ENCODE measurements at regions of chr15 and their contacts with region 1.

Region 1: DNA sequence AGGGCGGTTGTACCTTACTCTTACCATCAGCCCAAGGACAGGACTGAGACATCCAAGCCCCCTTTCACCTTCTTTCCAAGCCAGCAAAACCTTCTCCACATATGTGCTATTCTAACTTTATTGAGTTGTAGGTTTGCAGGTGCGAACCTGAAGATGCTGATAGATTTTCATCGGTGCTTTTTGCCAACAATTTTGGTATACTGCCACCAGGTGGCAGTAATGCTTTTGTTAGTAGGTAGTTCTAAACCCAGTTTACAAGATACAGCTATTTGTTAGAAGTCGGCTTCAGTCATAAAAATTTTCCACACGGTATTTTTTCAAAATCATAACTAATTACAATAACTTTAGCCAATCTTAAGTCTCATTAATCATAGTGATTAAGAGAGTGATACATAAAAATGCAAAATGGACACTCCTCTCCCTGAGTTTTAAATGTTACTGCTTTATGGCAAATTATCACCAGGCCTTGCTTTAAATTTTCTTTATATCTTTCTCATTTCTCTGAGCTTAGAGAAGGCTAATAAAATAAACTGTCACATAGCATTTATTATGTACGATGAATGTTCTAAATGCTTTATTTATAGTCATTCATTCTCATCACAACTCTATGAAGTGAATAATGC is 636 bp downstream of the TBC1D21 start:
- DNase-seq: no peak
- ATAC-seq: peak; percentile 38; the same call in 1 of the 2 replicates
- H3K4me3 Mint-ChIP-seq: no peak overlapping the region
- H3K27ac Mint-ChIP-seq: no peak overlapping the region
- H3K4me1 Mint-ChIP-seq: peaks cover 7% of the 10 kb centered on the region
- H3K27me3 Mint-ChIP-seq: no peaks in the 10 kb centered on the region; the same call in 1 of the 2 replicates
- CTCF ChIP-seq: 0 out of 2 replicates have a peak, but pooled peaks have one; percentile 39

Region 2: DNA sequence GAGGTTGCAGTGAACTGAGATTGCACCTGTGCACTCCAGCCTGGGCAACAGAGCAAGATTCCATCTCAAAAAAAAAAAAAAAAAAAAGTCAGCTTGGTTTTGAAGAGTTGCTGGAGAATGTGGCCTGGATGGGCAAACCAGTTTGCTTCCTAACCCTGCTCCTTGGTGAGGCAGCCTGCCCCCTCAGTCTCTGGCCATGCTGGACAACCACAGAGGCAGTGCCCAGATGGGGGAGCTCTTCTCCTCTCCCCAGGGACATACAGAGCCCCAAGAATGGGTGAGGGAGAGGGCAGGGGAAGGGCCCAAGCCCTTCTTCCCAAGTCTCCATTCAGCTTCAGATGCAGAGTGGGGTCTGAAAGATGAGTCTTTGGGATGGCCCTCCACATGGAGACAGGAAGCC is 161.9 kb before region 1 on chr15:
- CTCF ChIA-PET with region 1: interaction called, 11 read pairs
- POLR2A ChIA-PET with region 1: no interaction called
- DNase-seq: peak; percentile 48
- ATAC-seq: peak; percentile 68
- H3K4me3 Mint-ChIP-seq: no peak overlapping the region
- H3K27ac Mint-ChIP-seq: peak overlapping the region; percentile 45; the same call in 1 of the 2 replicates
- H3K4me1 Mint-ChIP-seq: no peaks in the 10 kb centered on the region
- H3K27me3 Mint-ChIP-seq: no peaks in the 10 kb centered on the region
- CTCF ChIP-seq: no peak

Region 3: GRCh38 chr15:73885954-73886700 is 12.1 kb after region 1 on chr15:
- CTCF ChIA-PET with region 1: interaction called, 13 read pairs
- POLR2A ChIA-PET with region 1: no interaction called
- DNase-seq: no peak
- ATAC-seq: no peak
- H3K4me3 Mint-ChIP-seq: no peak overlapping the region
- H3K27ac Mint-ChIP-seq: no peak overlapping the region
- H3K4me1 Mint-ChIP-seq: 0 out of 2 replicates have a peak, but pooled peaks cover 3% of the 10 kb centered on the region
- H3K27me3 Mint-ChIP-seq: no peaks in the 10 kb centered on the region; the same call in 1 of the 2 replicates
- CTCF ChIP-seq: no peak

Region 4: GRCh38 chr15:73891328-73892315 is 17.6 kb after region 1 on chr15:
- CTCF ChIA-PET with region 1: interaction called, 23 read pairs
- POLR2A ChIA-PET with region 1: interaction called, 3 read pairs
- DNase-seq: no peak
- ATAC-seq: no peak
- H3K4me3 Mint-ChIP-seq: no peak overlapping the region
- H3K27ac Mint-ChIP-seq: no peak overlapping the region
- H3K4me1 Mint-ChIP-seq: peaks cover 12% of the 10 kb centered on the region
- H3K27me3 Mint-ChIP-seq: peaks cover 4% of the 10 kb centered on the region; the same call in 1 of the 2 replicates
- CTCF ChIP-seq: no peak

Region 5: DNA sequence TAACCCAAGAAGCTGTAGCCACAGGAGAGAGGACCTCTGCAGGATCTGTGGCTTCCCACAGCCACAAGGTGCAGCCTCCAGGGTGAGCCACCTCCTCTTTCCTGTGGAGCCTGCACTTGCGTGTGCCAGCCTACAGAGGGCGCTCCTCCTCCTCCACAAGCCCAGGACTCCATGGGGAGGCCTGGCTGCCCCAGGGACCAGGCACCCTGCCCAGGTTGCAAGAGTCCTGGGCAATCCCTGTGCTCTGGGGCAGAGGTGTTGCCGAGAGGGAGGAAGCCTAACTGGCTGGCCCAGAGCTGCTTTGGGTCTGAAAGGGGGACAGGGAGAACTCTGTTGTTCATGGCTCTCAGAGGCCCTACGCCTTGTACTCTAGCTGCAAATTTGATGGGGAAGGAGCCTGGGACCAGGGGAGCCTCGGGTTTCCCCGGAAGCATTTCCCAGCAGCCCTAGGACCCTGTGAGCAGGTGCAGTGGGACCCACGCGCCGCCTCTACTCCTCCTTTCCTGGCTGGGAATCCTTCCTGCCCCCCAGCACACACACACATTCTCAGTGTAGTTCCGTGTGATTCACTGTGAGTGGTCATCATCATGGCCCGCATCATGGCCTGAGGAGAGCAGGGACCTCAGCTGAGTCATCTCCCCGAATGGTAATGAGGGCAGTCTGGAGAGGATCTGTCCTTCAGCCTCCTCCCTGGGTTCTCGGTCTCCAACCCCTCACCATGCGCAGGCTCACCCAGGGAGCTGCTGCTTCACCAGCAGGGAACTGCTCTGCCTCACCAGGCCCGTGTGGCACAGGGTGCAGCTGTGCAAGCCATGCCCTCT is 23.7 kb after region 1 on chr15:
- CTCF ChIA-PET with region 1: interaction called, 23 read pairs
- POLR2A ChIA-PET with region 1: interaction called, 3 read pairs
- DNase-seq: peak; percentile 78
- ATAC-seq: peak; percentile 92
- H3K4me3 Mint-ChIP-seq: no peak overlapping the region
- H3K27ac Mint-ChIP-seq: no peak overlapping the region
- H3K4me1 Mint-ChIP-seq: peaks cover 14% of the 10 kb centered on the region
- H3K27me3 Mint-ChIP-seq: no peaks in the 10 kb centered on the region
- CTCF ChIP-seq: peak; percentile 99

Region 6: DNA sequence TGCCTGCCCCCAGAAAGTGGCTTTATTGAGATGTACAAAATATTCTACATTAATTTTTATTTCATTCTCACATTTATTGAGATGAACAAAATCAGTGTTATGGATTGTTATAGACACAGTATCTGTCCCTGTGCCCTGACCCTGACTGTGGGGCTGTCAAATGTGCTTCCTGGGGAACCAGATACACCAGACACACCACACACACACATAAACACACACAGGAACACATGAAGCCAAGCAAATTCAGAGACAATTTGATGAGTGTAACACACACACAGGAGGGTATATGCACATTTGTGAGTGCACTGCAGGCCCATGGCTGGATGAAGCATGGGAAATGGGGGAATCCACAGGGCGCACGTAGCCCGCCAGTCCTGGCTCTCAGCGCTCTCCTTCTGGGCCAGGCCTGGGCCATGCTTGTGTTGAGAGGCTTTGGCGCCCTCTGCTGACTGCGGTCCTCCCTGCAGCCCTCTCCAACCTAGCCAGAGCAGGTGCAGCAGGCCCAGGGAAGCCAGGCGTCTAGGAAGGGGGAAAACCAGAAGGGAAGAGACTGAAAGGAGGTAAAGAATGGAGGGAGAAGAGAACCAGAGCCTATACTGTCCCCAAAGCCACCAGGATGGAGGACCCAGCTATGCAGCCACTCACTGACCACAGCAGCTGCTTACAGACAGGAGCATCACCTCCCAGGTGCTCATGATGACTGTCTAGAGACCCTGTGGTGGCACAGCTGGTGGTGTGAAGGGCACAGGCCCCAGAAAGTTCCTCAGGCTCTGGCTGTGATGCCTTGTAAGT is 34.2 kb after region 1 on chr15:
- CTCF ChIA-PET with region 1: interaction called, 45 read pairs
- POLR2A ChIA-PET with region 1: no interaction called
- DNase-seq: peak; percentile 95
- ATAC-seq: peak; percentile 99
- H3K4me3 Mint-ChIP-seq: no peak overlapping the region
- H3K27ac Mint-ChIP-seq: no peak overlapping the region
- H3K4me1 Mint-ChIP-seq: peaks cover 5% of the 10 kb centered on the region
- H3K27me3 Mint-ChIP-seq: peaks cover 7% of the 10 kb centered on the region
- CTCF ChIP-seq: peak; percentile 86

Region 7: DNA sequence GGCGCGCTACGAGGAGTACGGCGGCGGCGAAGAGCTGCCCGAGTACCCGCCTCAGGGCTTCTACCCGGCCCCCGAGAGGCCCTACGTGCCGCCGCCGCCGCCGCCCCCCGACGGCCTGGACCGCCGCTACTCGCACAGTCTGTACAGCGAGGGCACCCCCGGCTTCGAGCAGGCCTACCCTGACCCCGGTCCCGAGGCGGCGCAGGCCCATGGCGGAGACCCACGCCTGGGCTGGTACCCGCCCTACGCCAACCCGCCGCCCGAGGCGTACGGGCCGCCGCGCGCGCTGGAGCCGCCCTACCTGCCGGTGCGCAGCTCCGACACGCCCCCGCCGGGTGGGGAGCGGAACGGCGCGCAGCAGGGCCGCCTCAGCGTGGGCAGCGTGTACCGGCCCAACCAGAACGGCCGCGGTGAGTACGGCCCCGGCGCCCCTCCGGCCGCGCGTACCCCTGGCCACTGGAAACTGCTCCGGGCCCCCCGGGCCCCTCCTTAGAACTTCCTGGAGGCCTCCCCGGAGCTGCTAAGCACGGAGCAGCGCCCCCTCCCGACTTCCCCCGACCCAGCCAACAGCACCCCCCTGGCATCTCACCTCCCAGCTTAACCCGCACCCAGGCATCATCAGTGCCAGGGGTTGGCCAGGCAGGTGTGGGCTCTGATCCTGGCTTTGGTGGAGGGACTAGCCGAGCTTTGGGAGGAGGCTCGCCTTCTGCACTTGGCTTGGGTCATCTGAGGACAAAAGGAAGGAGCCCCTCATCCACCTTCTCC is 53.7 kb after region 1 on chr15:
- CTCF ChIA-PET with region 1: interaction called, 29 read pairs
- POLR2A ChIA-PET with region 1: no interaction called
- DNase-seq: peak; percentile 74
- ATAC-seq: peak; percentile 38
- H3K4me3 Mint-ChIP-seq: peak overlapping the region; percentile 68
- H3K27ac Mint-ChIP-seq: no peak overlapping the region
- H3K4me1 Mint-ChIP-seq: peaks cover 43% of the 10 kb centered on the region
- H3K27me3 Mint-ChIP-seq: peaks cover 11% of the 10 kb centered on the region
- CTCF ChIP-seq: peak; percentile 33; the same call in 1 of the 2 replicates

Region 8: DNA sequence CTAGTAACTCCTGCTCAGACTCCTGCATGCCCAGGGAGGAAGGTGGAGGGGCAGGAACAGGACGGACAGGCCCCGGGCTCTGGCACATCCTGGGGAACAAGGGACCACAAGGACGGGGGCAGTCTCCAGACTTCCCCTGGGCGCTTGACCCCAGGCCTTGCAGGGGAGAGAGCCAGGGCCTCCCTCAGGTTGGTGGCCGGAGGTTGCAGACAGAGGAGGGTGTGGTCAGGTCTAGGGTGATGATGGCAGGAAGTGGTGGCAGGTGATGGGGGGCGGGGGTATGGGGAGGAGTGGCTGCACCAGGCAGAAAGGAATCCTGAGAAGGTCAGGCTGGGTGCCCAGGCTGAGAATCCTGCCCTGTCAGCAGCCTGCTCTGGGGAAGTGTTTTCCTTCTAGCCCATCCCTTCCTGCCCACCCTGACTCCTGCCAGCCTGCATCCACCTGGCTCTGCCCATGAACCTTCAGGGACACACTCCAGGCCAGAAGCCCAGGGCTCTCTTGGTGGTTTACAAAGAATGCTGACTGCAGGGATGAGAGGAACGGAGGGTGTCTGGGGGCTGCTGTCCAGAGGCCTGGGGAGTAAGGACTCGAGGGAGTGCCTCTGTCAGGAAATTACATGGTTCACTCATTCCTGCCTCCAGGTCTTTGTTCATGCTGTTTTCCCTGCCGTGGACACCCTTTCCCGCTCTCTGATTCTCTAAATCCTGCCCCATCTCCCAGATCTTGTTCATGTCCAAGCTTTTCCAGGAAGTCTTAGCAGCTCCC is 68.1 kb after region 1 on chr15:
- CTCF ChIA-PET with region 1: no interaction called
- POLR2A ChIA-PET with region 1: no interaction called
- DNase-seq: no peak
- ATAC-seq: 0 out of 2 replicates have a peak, but pooled peaks have one; percentile 14
- H3K4me3 Mint-ChIP-seq: no peak overlapping the region
- H3K27ac Mint-ChIP-seq: no peak overlapping the region
- H3K4me1 Mint-ChIP-seq: no peaks in the 10 kb centered on the region
- H3K27me3 Mint-ChIP-seq: no peaks in the 10 kb centered on the region
- CTCF ChIP-seq: no peak

Region 9: DNA sequence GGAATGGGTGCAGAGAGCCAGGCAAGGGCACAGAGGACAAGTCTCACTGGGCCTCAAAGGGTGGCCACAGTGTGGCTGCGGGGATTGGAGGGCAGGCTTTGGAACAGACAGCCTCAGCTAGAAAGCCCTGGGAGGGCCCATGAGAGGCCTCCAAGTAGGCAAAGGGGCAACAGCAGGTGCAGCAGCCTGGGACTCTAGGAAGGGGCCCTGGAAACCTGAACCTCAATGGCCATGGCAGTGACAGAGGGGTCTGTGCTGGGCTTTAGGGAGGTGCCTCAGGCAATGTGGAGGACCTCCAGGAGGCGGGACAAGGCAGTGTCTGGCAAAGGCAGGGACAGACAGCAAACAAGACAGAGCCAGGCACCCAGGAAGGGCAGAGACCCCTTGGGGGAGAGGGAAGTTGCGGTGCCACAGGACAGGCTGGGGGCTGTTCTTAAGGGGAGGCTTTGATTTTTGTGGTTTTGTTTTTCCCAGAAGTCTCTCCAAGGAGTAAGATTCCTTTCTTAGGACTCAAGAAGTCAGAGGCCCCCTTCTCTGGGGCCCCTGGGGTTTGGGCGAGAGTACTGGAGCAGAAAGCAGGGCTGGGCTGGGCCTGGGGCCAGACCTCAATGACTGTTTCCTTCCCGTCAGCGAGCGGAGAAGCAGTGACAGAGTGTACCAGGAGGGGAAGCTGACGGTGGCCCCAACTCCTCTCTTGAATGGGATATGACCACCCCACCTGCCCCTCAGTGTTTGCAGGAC is 108.4 kb after region 1 on chr15:
- CTCF ChIA-PET with region 1: no interaction called
- POLR2A ChIA-PET with region 1: no interaction called
- DNase-seq: no peak
- ATAC-seq: no peak
- H3K4me3 Mint-ChIP-seq: no peak overlapping the region
- H3K27ac Mint-ChIP-seq: no peak overlapping the region
- H3K4me1 Mint-ChIP-seq: no peaks in the 10 kb centered on the region
- H3K27me3 Mint-ChIP-seq: peaks cover 12% of the 10 kb centered on the region
- CTCF ChIP-seq: no peak

Region 10: DNA sequence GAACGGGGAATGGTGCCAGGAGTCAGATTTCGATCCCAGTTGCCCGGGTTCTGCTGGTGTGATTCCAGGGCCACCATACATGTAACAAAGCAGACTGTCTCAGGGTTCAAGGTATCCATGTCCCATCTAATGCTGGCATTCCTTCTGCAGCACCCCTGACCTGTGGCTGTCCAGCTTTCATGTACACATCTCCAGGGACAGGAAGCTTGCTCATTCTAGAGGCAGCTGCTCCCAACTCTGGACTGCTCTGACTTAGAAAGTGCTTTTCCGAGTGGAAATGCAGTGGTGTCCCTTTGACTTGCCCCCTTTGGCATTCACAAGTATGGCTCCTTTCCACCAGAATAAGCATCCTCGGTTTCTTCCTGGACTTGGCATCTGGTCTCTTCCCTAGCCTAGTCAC is 151.4 kb after region 1 on chr15:
- CTCF ChIA-PET with region 1: no interaction called
- POLR2A ChIA-PET with region 1: no interaction called
- DNase-seq: no peak
- ATAC-seq: no peak
- H3K4me3 Mint-ChIP-seq: no peak overlapping the region
- H3K27ac Mint-ChIP-seq: no peak overlapping the region
- H3K4me1 Mint-ChIP-seq: no peaks in the 10 kb centered on the region
- H3K27me3 Mint-ChIP-seq: no peaks in the 10 kb centered on the region
- CTCF ChIP-seq: no peak

Region 11: DNA sequence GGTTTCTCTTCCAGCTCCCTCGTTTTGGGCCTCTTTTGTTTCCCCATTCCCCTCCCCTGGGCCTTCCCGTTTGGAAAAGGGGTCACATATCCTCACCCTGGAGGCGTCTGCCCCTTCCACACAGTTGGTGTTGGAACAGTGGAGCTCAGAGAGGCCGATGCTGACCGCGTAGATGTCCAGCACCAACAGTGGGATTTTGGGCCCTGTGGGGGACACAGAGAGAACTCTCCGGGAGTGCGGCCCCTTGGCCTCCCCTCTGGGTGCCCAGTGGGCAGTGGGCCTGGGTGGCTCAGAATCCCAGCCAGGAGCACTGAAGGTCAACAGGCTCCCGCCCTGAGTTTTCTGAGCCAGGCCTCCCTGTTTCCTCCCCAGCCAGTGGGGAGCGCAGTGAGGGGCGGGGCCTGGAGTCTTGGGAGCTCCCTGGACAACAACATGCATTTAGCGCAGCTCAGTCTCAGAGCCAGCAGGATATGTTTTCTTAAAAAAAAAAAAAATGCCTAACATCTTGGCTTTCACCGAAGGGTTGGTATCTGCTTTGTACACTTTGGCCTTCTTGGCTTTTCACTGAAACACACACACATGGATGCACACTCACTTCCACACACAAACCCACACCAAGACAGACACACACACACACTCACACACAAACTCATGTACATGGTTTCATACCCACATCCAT is 298.8 kb after region 1 on chr15:
- CTCF ChIA-PET with region 1: no interaction called
- POLR2A ChIA-PET with region 1: no interaction called
- DNase-seq: peak; percentile 36
- ATAC-seq: peak; percentile 23
- H3K4me3 Mint-ChIP-seq: no peak overlapping the region
- H3K27ac Mint-ChIP-seq: no peak overlapping the region
- H3K4me1 Mint-ChIP-seq: peaks cover 53% of the 10 kb centered on the region
- H3K27me3 Mint-ChIP-seq: peaks cover 3% of the 10 kb centered on the region; the same call in 1 of the 2 replicates
- CTCF ChIP-seq: no peak